ENCODE measurements at regions of chr7 and their contacts with region 1.

Region 1: GRCh38 chr7:12488341-12488740 is 82.2 kb upstream of the SCIN start:
- DNase-seq: no peak
- H3K4me3 ChIP-seq: no peak overlapping the region
- H3K27ac ChIP-seq: no peak overlapping the region
- H3K4me1 ChIP-seq: no peaks in the 10 kb centered on the region
- H3K27me3 ChIP-seq: no peaks in the 10 kb centered on the region
- CTCF ChIP-seq: no peak

Region 2: GRCh38 chr7:12391922-12392615 is 96.3 kb before region 1 on chr7:
- intact Hi-C with region 1: loop called (anchors 5 kb)
- DNase-seq: no peak
- H3K4me3 ChIP-seq: no peak overlapping the region
- H3K27ac ChIP-seq: no peak overlapping the region
- H3K4me1 ChIP-seq: no peaks in the 10 kb centered on the region
- H3K27me3 ChIP-seq: no peaks in the 10 kb centered on the region
- CTCF ChIP-seq: no peak

Region 3: GRCh38 chr7:12436896-12437535 is 51.3 kb before region 1 on chr7:
- intact Hi-C with region 1: no loop called
- DNase-seq: no peak
- H3K4me3 ChIP-seq: no peak overlapping the region
- H3K27ac ChIP-seq: no peak overlapping the region
- H3K4me1 ChIP-seq: no peaks in the 10 kb centered on the region
- H3K27me3 ChIP-seq: no peaks in the 10 kb centered on the region
- CTCF ChIP-seq: no peak